Ovary (tissue), 10 donors: ENCODE measurements at regions of chr10 and their contacts with region 1.

Region 1: GRCh38 chr10:131786756-131787605 is 113.8 kb upstream of the PPP2R2D start:
- DNase-seq: peak in 4 of 5 donors; percentile 25 to 53 (median 42)
- H3K4me3 ChIP-seq: no peak overlapping the region
- H3K27ac ChIP-seq: no peak overlapping the region
- H3K4me1 ChIP-seq: no peaks in the 10 kb centered on the region
- H3K27me3 ChIP-seq: no peaks in the 10 kb centered on the region
- CTCF ChIP-seq: peak; percentile 24 to 64 (median 51)
- EP300 ChIP-seq: no peak
- POLR2A ChIP-seq: no peak

Region 2: DNA sequence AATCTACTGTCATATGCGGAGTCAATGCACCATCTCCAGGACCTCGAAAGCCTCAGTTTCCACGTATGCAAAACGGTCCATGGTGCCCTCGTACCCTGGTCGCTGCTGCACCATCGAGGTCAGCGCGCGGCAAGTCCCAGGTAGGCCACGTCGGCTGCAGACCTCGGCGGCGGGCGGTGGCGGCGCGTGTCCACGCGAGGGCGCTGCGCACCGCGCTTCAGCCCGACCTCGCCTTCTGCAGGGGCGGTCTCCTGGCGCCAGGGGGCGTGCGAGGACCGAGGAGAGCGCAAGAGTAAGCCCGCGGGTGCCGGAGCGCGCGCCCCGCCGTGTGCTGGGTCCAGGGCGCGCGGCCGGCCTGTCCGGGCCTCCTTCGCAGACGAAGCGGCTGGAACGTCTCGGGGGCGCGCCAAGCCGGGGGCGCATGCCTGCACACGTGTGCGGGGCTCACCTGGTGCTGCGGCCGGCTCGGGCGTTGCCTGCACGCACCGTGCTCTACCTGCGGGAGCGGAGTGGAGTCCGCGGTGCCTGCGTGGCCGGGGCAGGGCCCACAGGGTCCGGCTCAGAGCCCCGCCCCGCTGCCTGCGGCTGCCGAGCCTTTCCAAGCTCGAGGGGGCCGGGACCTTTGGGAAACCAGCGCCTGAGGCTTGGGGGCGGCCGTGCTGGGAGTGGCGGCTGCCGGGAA is 1596.8 kb before region 1 on chr10:
- intact Hi-C with region 1: loop called in 2 of 4 experiments (anchors 10 kb)
- DNase-seq: peak; percentile 86 to 94 (median 94)
- H3K4me3 ChIP-seq: peak overlapping the region; percentile 43
- H3K27ac ChIP-seq: peak overlapping the region in 1 of 2 donors; percentile 45
- H3K4me1 ChIP-seq: peaks cover 6% of the 10 kb centered on the region
- H3K27me3 ChIP-seq: no peaks in the 10 kb centered on the region
- CTCF ChIP-seq: peak; percentile 98 to 100 (median 99)
- EP300 ChIP-seq: no peak
- POLR2A ChIP-seq: no peak

Region 3: DNA sequence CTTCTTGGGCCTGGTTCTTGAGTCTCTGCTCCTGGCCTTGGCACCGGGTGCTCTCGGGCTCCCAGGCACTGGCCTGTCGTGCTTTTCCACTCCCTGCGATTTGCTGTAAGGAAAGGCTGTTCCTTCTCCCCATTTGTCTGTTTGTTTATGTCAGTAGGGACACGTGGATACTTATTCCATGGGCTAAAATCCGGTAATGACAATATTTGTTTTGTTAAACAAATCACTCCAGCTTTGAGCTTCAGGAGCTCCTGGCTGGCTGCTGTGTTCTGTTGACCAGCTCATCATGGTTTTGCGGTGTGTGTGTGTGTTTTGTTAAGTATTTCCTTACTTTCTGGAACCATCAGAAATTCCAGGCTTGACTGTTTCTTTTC is 261.3 kb after region 1 on chr10:
- intact Hi-C with region 1: loop called in 1 of 4 experiments (anchors 5 kb)
- DNase-seq: no peak
- H3K4me3 ChIP-seq: no peak overlapping the region
- H3K27ac ChIP-seq: no peak overlapping the region
- H3K4me1 ChIP-seq: no peaks in the 10 kb centered on the region
- H3K27me3 ChIP-seq: no peaks in the 10 kb centered on the region
- CTCF ChIP-seq: no peak
- EP300 ChIP-seq: no peak
- POLR2A ChIP-seq: no peak

Region 4: GRCh38 chr10:132223156-132223590 is 436.2 kb after region 1 on chr10:
- intact Hi-C with region 1: no loop called
- DNase-seq: peak; percentile 68 to 85 (median 81)
- H3K4me3 ChIP-seq: no peak overlapping the region
- H3K27ac ChIP-seq: no peak overlapping the region
- H3K4me1 ChIP-seq: no peaks in the 10 kb centered on the region
- H3K27me3 ChIP-seq: no peaks in the 10 kb centered on the region
- CTCF ChIP-seq: peak; percentile 82 to 91 (median 84)
- EP300 ChIP-seq: no peak
- POLR2A ChIP-seq: no peak